Heart right ventricle (tissue), 16 donors: ENCODE measurements at regions of chr1 and their contacts with region 1.

Region 1: GRCh38 chr1:9292361-9293240 is at the start of gene SPSB1:
- DNase-seq: peak; percentile 74 to 75
- ATAC-seq: peak; percentile 48 to 81 (median 70)
- H3K4me3 ChIP-seq: peak within 1 kb of the TSS; percentile 51 to 98 (median 75)
- H3K27ac ChIP-seq: peak within 1 kb of the TSS; percentile 73 to 95 (median 86)
- H3K4me1 ChIP-seq: peaks cover 6 to 54% (median 32%) of the 10 kb centered on the region in 9 donors
- H3K27me3 ChIP-seq: peaks cover 0 to 8% (median 0%) of the 10 kb centered on the region in 7 donors
- CTCF ChIP-seq: peak in 3 of 9 donors; percentile 7 to 15 (median 14)
- total RNA-seq, gene SPSB1: 5.5 to 16.5 (median 9.4) TPM

Region 2: DNA sequence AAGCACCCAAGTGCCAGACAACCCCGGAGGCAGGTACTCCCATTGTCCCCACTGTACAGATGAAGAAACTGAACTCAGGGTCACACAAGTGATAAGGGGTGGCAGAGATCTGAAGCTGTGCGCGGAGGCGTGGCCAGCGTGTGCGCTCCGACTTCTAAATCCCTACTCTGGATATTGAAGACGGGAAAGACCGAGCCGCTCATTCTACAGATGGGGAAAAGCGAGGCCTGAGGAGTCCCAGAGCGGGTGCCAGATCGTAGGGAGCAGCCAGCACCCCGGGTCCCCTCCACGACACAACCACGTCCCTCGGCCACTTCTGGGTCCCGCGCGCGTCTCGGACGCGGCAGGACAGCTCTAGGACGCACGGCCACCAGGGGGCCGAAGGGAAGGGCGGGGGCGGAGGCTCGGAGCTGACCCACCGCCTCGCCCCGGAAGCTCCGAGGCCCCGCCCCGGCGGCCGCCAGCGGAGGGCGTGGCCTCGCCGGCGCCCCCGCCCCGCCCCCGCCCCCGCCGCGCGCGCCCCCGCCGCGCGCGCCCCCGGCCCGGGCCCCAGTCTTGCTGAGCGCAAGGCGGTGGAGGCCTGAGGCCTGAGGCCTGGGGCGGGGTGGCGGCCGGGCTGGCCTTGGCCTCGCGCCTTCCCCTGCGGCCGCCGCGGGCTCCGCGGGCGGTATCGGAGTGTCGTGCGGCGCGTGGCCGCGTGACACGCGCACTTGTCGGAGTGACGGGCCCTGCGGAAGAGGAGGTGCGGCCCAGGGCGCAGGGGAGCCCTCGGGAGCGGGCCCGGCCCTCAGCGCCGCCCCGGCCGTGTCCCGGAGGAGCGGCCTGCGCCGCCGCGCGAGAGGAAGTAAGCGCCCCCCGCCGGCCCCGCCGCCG is 58.1 kb before region 1 on chr1 and contains the start of gene H6PD:
- intact Hi-C with region 1: no loop called
- DNase-seq: peak; percentile 86 to 91
- ATAC-seq: peak; percentile 71 to 89 (median 82)
- H3K4me3 ChIP-seq: peak within 1 kb of the TSS; percentile 40 to 78 (median 66)
- H3K27ac ChIP-seq: peak within 1 kb of the TSS; percentile 91 to 99 (median 95)
- H3K4me1 ChIP-seq: peaks cover 2 to 65% (median 54%) of the 10 kb centered on the region in 9 donors
- H3K27me3 ChIP-seq: no peaks in the 10 kb centered on the region
- CTCF ChIP-seq: peak; percentile 68 to 84 (median 71)
- total RNA-seq, gene H6PD: 22.3 to 45.0 (median 29.3) TPM

Region 3: DNA sequence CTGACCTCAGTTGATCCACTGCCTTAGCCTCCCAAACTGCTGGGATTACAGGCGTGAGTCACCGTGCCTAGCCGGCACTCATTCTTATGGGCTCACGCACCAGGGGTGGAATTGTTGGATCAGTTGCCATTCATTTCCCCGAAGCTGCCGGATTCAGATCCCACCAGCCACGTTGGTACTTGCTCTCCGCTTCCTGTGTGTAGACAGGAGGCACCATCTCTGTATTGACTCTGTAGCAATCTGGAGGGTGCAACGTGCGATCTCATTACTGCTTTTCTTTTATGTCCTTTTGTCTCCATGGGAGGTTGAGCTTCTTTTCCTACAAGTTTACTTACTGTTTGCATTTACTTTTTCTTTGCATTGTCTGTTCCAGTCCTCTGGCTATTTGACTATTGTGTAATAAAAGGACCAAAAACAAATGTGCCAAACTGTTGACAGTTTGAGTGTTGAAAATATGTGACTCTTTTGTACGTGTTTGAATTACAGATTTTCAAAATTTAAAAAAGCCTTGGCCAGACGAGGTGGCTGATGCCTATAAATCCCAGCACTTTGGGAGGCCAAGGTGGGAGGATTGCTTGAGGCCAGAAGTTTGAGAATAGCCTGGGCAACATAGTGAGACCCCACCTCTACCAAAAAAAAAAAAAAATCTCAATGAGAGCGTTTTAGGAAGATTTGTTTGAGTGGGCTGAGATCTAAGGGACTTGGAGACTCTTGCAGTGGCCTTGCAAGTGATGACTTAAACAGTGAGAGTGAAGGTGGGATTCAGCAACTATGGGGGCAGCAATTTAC is 39.2 kb after region 1 on chr1:
- intact Hi-C with region 1: loop called in 1 of 10 experiments (anchors 5 kb)
- DNase-seq: no peak
- ATAC-seq: no peak
- H3K4me3 ChIP-seq: no peak overlapping the region
- H3K27ac ChIP-seq: no peak overlapping the region
- H3K4me1 ChIP-seq: peaks cover 0 to 9% (median 3%) of the 10 kb centered on the region in 9 donors
- H3K27me3 ChIP-seq: no peaks in the 10 kb centered on the region
- CTCF ChIP-seq: no peak

Region 4: GRCh38 chr1:9438431-9439073 is 146.0 kb after region 1 on chr1:
- intact Hi-C with region 1: loop called in 1 of 10 experiments (anchors 5 kb)
- DNase-seq: peak; percentile 26 to 32
- ATAC-seq: peak in 7 of 8 donors; percentile 15 to 62 (median 30)
- H3K4me3 ChIP-seq: no peak overlapping the region
- H3K27ac ChIP-seq: peak overlapping the region in 9 of 10 donors; percentile 9 to 91 (median 56)
- H3K4me1 ChIP-seq: peaks cover 5 to 91% (median 50%) of the 10 kb centered on the region in 9 donors
- H3K27me3 ChIP-seq: no peaks in the 10 kb centered on the region
- CTCF ChIP-seq: no peak

Region 5: GRCh38 chr1:9486466-9487140 is 194.0 kb after region 1 on chr1:
- intact Hi-C with region 1: loop called in 8 of 10 experiments (anchors 1 to 5 kb)
- DNase-seq: no peak
- ATAC-seq: peak in 1 of 8 donors; percentile 35
- H3K4me3 ChIP-seq: no peak overlapping the region
- H3K27ac ChIP-seq: peak overlapping the region in 3 of 10 donors; percentile 1 to 41 (median 12)
- H3K4me1 ChIP-seq: peaks cover 0 to 6% (median 0%) of the 10 kb centered on the region in 9 donors
- H3K27me3 ChIP-seq: peaks cover 0 to 6% (median 0%) of the 10 kb centered on the region in 7 donors
- CTCF ChIP-seq: no peak

Region 6: GRCh38 chr1:9573723-9574122 is 281.1 kb after region 1 on chr1:
- intact Hi-C with region 1: loop called in 4 of 10 experiments (anchors 5 to 10 kb)
- DNase-seq: no peak
- ATAC-seq: peak in 7 of 8 donors; percentile 49 to 72 (median 62)
- H3K4me3 ChIP-seq: no peak overlapping the region
- H3K27ac ChIP-seq: no peak overlapping the region
- H3K4me1 ChIP-seq: peaks cover 0 to 12% (median 0%) of the 10 kb centered on the region in 9 donors
- H3K27me3 ChIP-seq: no peaks in the 10 kb centered on the region
- CTCF ChIP-seq: peak; percentile 10 to 62 (median 46)